ENCODE measurements at regions of chr7 and their contacts with region 1.

Region 1: GRCh38 chr7:93359520-93360198 is 127.5 kb downstream of the VPS50 start:
- DNase-seq: no peak
- ATAC-seq: no peak
- H3K4me3 Mint-ChIP-seq: no peak overlapping the region
- H3K27ac Mint-ChIP-seq: no peak overlapping the region
- H3K4me1 Mint-ChIP-seq: no peaks in the 10 kb centered on the region
- H3K27me3 Mint-ChIP-seq: no peaks in the 10 kb centered on the region
- CTCF ChIP-seq: no peak

Region 2: GRCh38 chr7:93374345-93374940 is 14.8 kb after region 1 on chr7:
- CTCF ChIA-PET with region 1: interaction called, 10 read pairs
- POLR2A ChIA-PET with region 1: no interaction called
- intact Hi-C with region 1: no loop called
- DNase-seq: no peak
- ATAC-seq: peak; percentile 66
- H3K4me3 Mint-ChIP-seq: no peak overlapping the region
- H3K27ac Mint-ChIP-seq: no peak overlapping the region
- H3K4me1 Mint-ChIP-seq: no peaks in the 10 kb centered on the region
- H3K27me3 Mint-ChIP-seq: peaks cover 14% of the 10 kb centered on the region
- CTCF ChIP-seq: peak; percentile 63

Region 3: GRCh38 chr7:93475811-93476210 is 116.2 kb after region 1 on chr7:
- CTCF ChIA-PET with region 1: no interaction called
- POLR2A ChIA-PET with region 1: no interaction called
- intact Hi-C with region 1: no loop called
- DNase-seq: no peak
- ATAC-seq: no peak
- H3K4me3 Mint-ChIP-seq: no peak overlapping the region
- H3K27ac Mint-ChIP-seq: no peak overlapping the region
- H3K4me1 Mint-ChIP-seq: no peaks in the 10 kb centered on the region
- H3K27me3 Mint-ChIP-seq: peaks cover 8% of the 10 kb centered on the region
- CTCF ChIP-seq: no peak